CD8-positive, alpha-beta T cell (primary cell): ENCODE measurements at regions of chr6 and their contacts with region 1.

Region 1: DNA sequence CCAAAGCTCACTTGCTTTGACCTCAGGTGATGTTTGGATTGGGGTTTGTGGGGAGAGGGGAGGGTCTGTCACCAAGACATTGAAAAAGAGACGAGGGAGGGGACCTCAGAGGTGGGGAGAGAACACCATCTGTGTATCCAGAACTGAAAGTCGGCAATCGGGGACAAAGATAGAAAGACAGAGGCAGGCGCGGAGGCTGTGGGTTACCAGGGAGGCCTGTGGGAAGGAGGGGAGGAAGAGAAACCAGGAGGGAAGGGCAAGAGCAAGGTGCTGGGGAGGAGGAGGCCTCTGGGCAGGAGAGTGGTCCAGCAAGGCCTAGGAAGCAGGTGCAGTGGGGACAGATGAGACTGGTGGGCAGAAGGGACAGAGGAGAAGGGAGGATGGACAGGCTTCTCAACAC is 211.2 kb downstream of the CDC5L start:
- DNase-seq: no peak
- ATAC-seq: no peak
- H3K4me3 ChIP-seq: no peak overlapping the region
- H3K4me3 Mint-ChIP-seq: no peak overlapping the region
- H3K27ac ChIP-seq: no peak overlapping the region
- H3K27ac Mint-ChIP-seq: no peak overlapping the region
- H3K4me1 ChIP-seq: no peaks in the 10 kb centered on the region
- H3K4me1 Mint-ChIP-seq: no peaks in the 10 kb centered on the region
- H3K27me3 ChIP-seq: no peaks in the 10 kb centered on the region
- H3K27me3 Mint-ChIP-seq: no peaks in the 10 kb centered on the region
- CTCF ChIP-seq: no peak

Region 2: GRCh38 chr6:44614396-44614795 is 15.7 kb after region 1 on chr6:
- CTCF ChIA-PET with region 1: interaction called, 3 read pairs
- POLR2A ChIA-PET with region 1: no interaction called
- intact Hi-C with region 1: loop called in 1 of 2 experiments (anchors 1 kb)
- DNase-seq: no peak
- ATAC-seq: no peak
- H3K4me3 ChIP-seq: no peak overlapping the region
- H3K4me3 Mint-ChIP-seq: no peak overlapping the region
- H3K27ac ChIP-seq: no peak overlapping the region
- H3K27ac Mint-ChIP-seq: no peak overlapping the region
- H3K4me1 ChIP-seq: no peaks in the 10 kb centered on the region
- H3K4me1 Mint-ChIP-seq: no peaks in the 10 kb centered on the region
- H3K27me3 ChIP-seq: no peaks in the 10 kb centered on the region
- H3K27me3 Mint-ChIP-seq: no peaks in the 10 kb centered on the region
- CTCF ChIP-seq: no peak